AG04450 (cell line): ENCODE measurements at regions of chr3 and their contacts with region 1.

Region 1: GRCh38 chr3:158659454-158660237 is 12.8 kb downstream of the LXN start:
- DNase-seq: peak; percentile 55
- H3K4me3 ChIP-seq: no peak overlapping the region
- H3K27ac ChIP-seq: no peak overlapping the region
- H3K27me3 ChIP-seq: no peaks in the 10 kb centered on the region
- CTCF ChIP-seq: peak; percentile 76

Region 2: DNA sequence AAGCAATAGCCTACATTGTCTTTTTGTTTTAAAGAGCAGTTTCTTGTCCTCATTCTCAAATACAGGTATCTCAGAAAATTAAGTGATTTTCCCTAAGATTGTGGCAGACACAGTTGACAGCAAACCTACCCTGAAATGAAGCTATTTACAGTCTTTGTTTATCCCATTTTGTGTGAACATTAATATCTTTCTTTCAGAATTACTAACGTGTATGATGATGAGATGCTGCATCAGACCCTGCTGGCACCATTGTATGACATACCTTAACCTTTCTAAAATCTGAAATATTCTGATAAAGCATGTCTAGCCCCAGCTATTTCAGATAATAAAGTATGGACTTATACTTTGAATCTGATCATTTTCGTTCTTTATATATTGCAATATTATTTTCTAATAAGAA is 363.9 kb before region 1 on chr3:
- CTCF ChIA-PET with region 1: no interaction called
- POLR2A ChIA-PET with region 1: no interaction called
- DNase-seq: no peak
- H3K4me3 ChIP-seq: no peak overlapping the region
- H3K27ac ChIP-seq: no peak overlapping the region
- H3K27me3 ChIP-seq: no peaks in the 10 kb centered on the region
- CTCF ChIP-seq: no peak

Region 3: GRCh38 chr3:158465074-158465473 is 194.6 kb before region 1 on chr3:
- CTCF ChIA-PET with region 1: no interaction called
- POLR2A ChIA-PET with region 1: no interaction called
- DNase-seq: no peak
- H3K4me3 ChIP-seq: no peak overlapping the region
- H3K27ac ChIP-seq: no peak overlapping the region
- H3K27me3 ChIP-seq: no peaks in the 10 kb centered on the region
- CTCF ChIP-seq: no peak

Region 4: GRCh38 chr3:158625881-158626280 is 33.8 kb before region 1 on chr3:
- CTCF ChIA-PET with region 1: no interaction called
- POLR2A ChIA-PET with region 1: no interaction called
- DNase-seq: no peak
- H3K4me3 ChIP-seq: no peak overlapping the region
- H3K27ac ChIP-seq: no peak overlapping the region
- H3K27me3 ChIP-seq: no peaks in the 10 kb centered on the region
- CTCF ChIP-seq: no peak

Region 5: GRCh38 chr3:158644345-158644908 is 15.2 kb before region 1 on chr3 and contains the start of gene GFM1:
- CTCF ChIA-PET with region 1: interaction called, 89 read pairs
- POLR2A ChIA-PET with region 1: interaction called, 10 read pairs
- DNase-seq: peak; percentile 86
- H3K4me3 ChIP-seq: peak within 1 kb of the TSS; percentile 92
- H3K27ac ChIP-seq: peak within 1 kb of the TSS; percentile 87
- H3K27me3 ChIP-seq: no peaks in the 10 kb centered on the region
- CTCF ChIP-seq: peak; percentile 94
- polyA plus RNA-seq, gene GFM1: 18.9 and 22.2 TPM in 2 replicates

Region 6: DNA sequence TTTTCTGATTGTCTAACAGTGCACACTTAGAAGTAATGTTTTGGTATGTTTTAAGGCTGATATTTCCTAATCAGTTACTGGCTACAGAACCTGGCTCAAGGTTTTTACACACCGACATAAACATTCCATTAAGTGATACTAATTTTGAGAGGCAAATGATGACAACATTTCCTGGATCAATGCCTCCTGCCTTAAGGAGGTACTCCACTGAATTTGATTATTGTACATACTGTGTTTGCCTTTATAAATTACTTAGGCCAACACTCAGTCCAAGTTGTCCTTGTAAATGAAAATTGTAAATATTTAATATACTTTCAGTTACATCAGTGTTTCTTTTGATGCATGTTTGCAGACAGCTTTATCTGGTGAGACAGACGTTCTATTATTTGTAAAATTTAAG is 37.0 kb after region 1 on chr3:
- CTCF ChIA-PET with region 1: interaction called, 12 read pairs
- POLR2A ChIA-PET with region 1: no interaction called
- DNase-seq: no peak
- H3K4me3 ChIP-seq: no peak overlapping the region
- H3K27ac ChIP-seq: no peak overlapping the region
- H3K27me3 ChIP-seq: no peaks in the 10 kb centered on the region
- CTCF ChIP-seq: no peak

Region 7: GRCh38 chr3:158782283-158782989 is 122.8 kb after region 1 on chr3:
- CTCF ChIA-PET with region 1: interaction called, 18 read pairs
- POLR2A ChIA-PET with region 1: no interaction called
- DNase-seq: no peak
- H3K4me3 ChIP-seq: no peak overlapping the region
- H3K27ac ChIP-seq: no peak overlapping the region
- H3K27me3 ChIP-seq: no peaks in the 10 kb centered on the region
- CTCF ChIP-seq: no peak

Region 8: DNA sequence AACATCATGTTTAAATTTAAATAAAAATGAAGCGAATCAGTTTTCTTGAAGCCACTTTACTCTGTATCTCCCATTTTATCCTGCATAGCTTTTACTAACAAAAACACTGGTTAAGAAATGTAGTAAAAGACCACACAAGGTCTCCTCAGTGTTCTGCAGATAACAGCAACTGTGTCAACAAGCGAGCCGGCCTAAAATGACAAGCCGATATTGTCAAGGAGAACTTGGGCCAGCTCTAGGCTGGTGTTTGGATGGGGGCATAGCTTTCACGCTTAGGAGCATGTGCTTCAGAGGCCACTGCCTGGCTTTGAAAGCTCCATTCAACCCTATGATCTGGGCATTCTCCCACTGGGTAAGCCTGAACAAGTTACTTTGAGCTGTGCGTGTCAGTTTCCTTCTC is 180.3 kb after region 1 on chr3:
- CTCF ChIA-PET with region 1: no interaction called
- POLR2A ChIA-PET with region 1: no interaction called
- DNase-seq: no peak
- H3K4me3 ChIP-seq: no peak overlapping the region
- H3K27ac ChIP-seq: no peak overlapping the region
- H3K27me3 ChIP-seq: no peaks in the 10 kb centered on the region
- CTCF ChIP-seq: no peak

Region 9: GRCh38 chr3:159260049-159260662 is 600.5 kb after region 1 on chr3:
- CTCF ChIA-PET with region 1: interaction called, 17 read pairs
- POLR2A ChIA-PET with region 1: no interaction called
- DNase-seq: peak; percentile 68
- H3K4me3 ChIP-seq: no peak overlapping the region
- H3K27ac ChIP-seq: no peak overlapping the region
- H3K27me3 ChIP-seq: peaks cover 2% of the 10 kb centered on the region
- CTCF ChIP-seq: peak; percentile 75